ENCODE measurements at regions of chr17 and their contacts with region 1.

Region 1: DNA sequence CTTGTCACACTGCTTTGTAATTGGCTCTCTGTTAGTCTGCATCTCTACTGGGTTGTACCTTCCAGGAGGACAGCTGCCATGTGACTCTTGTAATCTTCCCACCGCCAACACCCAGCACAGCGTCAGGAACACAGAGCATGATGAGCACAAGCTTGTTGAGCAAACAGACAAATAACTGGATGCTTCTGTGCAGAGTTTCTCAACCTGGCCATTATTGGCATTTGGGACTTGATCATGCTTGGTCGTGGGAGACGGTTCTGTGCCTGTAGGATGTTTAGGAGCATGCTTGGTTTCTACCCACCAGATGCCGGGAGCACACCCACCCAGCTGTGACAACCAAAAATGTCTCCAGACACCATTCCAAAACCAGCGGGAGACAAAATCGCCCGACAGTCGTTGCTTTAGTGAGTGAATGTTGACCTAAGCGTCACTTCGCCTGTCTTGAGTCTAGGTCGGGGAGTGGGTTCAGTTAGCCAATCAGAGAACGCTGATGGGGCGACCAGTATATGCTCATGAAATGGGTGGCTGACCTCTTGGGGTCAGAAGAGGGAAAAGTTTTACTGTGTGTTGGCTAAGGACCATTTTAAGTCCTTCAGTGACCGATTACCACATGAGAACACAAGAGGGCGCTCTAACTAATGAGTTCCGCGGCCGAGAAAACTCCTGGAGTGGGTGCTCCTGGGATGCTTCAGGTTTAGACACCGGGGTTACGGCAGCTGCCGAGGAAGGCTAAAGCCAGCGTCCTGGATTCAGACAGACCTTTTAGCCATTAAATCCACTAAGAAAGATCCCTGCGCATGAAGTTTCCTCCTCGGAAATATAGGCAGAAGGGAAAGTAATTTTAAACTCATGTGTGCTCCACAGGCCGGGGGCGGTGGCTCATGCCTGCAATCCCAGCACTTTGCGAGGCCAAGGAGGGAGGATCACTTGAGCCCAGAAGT is 57.8 kb upstream of the TEX2 start:
- DNase-seq: peak; percentile 71
- ATAC-seq: peak; percentile 89
- H3K4me3 ChIP-seq: no peak overlapping the region
- H3K27ac ChIP-seq: peak overlapping the region; percentile 44
- H3K4me1 ChIP-seq: peaks cover 19% of the 10 kb centered on the region
- H3K27me3 ChIP-seq: no peaks in the 10 kb centered on the region
- CTCF ChIP-seq: peak; percentile 84

Region 2: DNA sequence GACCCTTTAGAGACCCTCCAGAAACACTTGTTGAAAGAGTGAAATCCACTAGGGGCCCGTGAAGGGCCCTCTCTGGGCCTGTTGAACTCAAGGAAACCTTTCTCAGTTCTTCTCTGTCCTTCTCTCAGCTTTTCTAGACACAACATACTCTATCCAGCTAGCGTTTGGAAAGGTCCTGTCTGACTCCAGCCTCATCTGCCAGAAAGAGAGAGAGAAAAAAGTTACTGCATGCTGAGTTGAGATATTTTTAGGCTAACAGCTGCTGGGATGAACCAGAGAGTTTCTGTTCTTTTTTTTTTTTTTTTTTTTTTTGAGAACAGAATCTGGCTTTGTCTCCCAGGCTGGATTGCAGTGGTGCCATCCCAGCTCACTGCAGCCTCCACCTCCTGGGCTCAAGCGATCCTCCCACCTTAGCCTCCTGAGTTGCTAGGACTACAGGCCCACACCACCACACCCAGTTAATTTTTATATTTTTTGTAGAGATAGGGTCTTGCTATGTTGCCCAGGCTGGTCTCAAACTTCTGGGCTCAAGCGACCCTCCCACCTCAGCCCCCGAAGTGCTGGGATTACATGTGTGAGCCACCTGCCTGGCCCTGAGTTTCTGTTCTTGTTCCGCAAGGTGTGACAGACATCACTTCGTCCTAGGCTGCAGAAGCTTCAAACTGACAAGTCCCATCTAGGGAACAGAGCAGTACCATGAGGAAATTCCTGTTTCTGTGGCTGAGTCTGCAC is 42.9 kb before region 1 on chr17:
- intact Hi-C with region 1: no loop called
- DNase-seq: no peak
- ATAC-seq: no peak
- H3K4me3 ChIP-seq: no peak overlapping the region
- H3K27ac ChIP-seq: peak overlapping the region; percentile 39
- H3K4me1 ChIP-seq: peaks cover 16% of the 10 kb centered on the region
- H3K27me3 ChIP-seq: no peaks in the 10 kb centered on the region
- CTCF ChIP-seq: no peak

Region 3: DNA sequence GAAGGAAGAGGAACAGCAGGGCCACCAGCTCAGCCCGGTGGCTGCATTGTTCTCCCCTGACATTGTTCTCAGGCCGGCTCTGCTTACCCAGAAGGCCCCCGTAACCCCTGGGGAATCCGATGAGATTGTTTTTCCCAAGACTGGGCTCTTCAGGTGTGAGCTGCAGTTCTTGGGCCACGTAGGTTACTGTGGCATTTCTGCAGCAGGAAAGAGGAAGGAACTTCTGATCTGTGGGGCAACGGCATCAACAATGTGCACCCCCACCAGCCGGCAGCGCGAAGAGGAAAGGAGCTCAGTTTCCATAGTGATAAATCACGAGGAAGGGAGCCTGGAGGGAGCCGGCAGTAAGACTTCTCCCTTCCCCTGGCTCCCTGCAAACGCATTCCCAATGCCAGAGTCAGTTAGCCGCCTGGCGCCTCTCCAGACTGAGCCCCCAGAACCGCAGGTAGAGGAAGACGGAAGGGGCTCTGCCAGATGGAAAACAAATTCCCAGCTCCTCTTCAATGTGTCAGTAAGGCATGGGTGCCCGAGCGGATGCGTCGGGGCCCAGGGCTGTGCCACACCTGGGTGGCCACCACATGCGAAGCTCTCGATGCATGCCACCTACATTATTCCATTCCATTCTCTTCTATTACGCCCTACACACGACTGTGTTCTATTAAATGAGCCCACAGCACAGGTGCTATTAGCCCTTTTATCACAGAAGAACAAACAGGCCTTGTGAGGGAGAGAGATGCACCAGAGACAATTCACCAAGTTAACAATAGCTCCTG is 91.3 kb after region 1 on chr17:
- intact Hi-C with region 1: loop called (anchors 5 kb)
- DNase-seq: peak; percentile 84
- ATAC-seq: peak; percentile 86
- H3K4me3 ChIP-seq: peak overlapping the region; percentile 42
- H3K27ac ChIP-seq: peak overlapping the region; percentile 83
- H3K4me1 ChIP-seq: peaks cover 18% of the 10 kb centered on the region
- H3K27me3 ChIP-seq: no peaks in the 10 kb centered on the region
- CTCF ChIP-seq: no peak